ENCODE measurements at regions of chr9 and their contacts with region 1.

Region 1: GRCh38 chr9:3441197-3441816 is 84.5 kb downstream of the RFX3 start:
- DNase-seq: no peak
- H3K4me3 ChIP-seq: no peak overlapping the region
- H3K27me3 ChIP-seq: no peaks in the 10 kb centered on the region
- CTCF ChIP-seq: peak; percentile 65

Region 2: DNA sequence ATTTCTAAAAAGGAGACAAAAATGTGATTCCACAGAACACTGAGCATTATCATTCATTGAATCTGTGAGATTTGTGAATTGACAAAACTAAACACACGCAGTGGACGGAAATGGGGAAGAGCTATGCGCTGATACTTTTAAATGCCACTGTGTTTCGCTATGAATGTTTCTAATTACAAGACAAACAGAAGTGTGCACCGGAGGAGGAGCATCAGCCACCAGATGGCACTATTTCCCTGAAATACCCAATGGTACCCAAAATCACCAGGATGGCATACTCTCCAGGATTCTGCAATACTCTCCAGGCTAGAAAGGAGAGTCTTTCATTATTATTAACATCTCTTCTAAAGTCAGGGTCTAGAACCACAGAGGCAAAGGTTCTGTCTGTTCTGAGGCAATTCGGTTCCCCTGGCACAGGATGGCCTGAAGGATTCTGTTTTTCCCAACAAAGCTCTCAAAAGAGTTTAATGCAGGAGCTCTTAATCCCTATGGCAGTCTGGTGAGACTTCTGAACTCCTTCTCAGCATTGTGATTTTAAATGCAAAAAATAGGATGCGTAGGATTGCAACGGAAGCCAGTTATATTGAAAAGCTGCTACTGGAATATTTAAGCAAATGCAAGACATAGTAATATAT is 583.6 kb before region 1 on chr9:
- CTCF ChIA-PET with region 1: interaction called, 25 read pairs
- POLR2A ChIA-PET with region 1: no interaction called
- DNase-seq: no peak
- H3K4me3 ChIP-seq: no peak overlapping the region
- H3K27me3 ChIP-seq: peaks cover 1% of the 10 kb centered on the region; the same call in 1 of the 2 replicates
- CTCF ChIP-seq: peak; percentile 82

Region 3: GRCh38 chr9:2872257-2872935 is 568.9 kb before region 1 on chr9:
- CTCF ChIA-PET with region 1: interaction called, 19 read pairs
- POLR2A ChIA-PET with region 1: no interaction called
- DNase-seq: no peak
- H3K4me3 ChIP-seq: no peak overlapping the region
- H3K27me3 ChIP-seq: peaks cover 2% of the 10 kb centered on the region; the same call in 1 of the 2 replicates
- CTCF ChIP-seq: peak; percentile 38

Region 4: GRCh38 chr9:3240656-3241268 is 200.5 kb before region 1 on chr9:
- CTCF ChIA-PET with region 1: interaction called, 33 read pairs
- POLR2A ChIA-PET with region 1: no interaction called
- DNase-seq: peak; percentile 3
- H3K4me3 ChIP-seq: no peak overlapping the region
- H3K27me3 ChIP-seq: no peaks in the 10 kb centered on the region
- CTCF ChIP-seq: peak; percentile 83

Region 5: DNA sequence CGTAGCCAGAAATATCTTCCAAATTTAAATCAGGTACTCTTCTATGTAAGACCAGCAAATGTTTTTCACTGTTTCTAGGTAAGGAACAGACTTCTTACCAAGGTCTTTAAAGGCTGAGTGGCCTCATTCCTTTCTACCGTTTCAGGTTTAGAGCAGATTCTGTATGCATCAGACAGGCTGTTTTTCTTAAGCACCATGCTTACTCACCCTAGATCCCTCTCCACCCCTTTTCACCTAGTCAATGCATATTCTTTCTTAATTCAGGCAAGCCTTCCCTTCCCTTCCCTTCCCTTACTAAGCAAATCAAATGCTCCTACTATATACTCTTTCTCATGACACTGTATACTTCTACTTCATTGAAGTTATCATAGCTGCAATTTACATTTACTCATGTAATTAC is 13.8 kb after region 1 on chr9:
- CTCF ChIA-PET with region 1: interaction called, 13 read pairs
- POLR2A ChIA-PET with region 1: no interaction called
- DNase-seq: no peak
- H3K4me3 ChIP-seq: no peak overlapping the region
- H3K27me3 ChIP-seq: no peaks in the 10 kb centered on the region
- CTCF ChIP-seq: no peak

Measured in BJ (cell line).